ENCODE measurements at regions of chr17 and their contacts with region 1.

Region 1: GRCh38 chr17:31094600-31095238 is at the start of gene NF1:
- DNase-seq: peak; percentile 92
- H3K4me3 Mint-ChIP-seq: peak within 1 kb of the TSS; percentile 94
- H3K27ac Mint-ChIP-seq: peak within 1 kb of the TSS; percentile 72
- H3K4me1 Mint-ChIP-seq: peaks cover 11% of the 10 kb centered on the region
- H3K27me3 Mint-ChIP-seq: no peaks in the 10 kb centered on the region
- total RNA-seq, gene NF1: 19.5 to 22.8 TPM

Region 2: GRCh38 chr17:30970831-30971567 is 123.7 kb before region 1 on chr17 and contains the start of gene RNF135:
- CTCF ChIA-PET with region 1: no interaction called
- intact Hi-C with region 1: no loop called
- DNase-seq: peak; percentile 60
- H3K4me3 Mint-ChIP-seq: peak within 1 kb of the TSS; percentile 88
- H3K27ac Mint-ChIP-seq: peak within 1 kb of the TSS; percentile 79
- H3K4me1 Mint-ChIP-seq: peaks cover 31% of the 10 kb centered on the region
- H3K27me3 Mint-ChIP-seq: peaks cover 9% of the 10 kb centered on the region
- total RNA-seq, gene RNF135: 5.0 to 5.4 TPM

Region 3: GRCh38 chr17:31052187-31052889 is 42.4 kb before region 1 on chr17:
- CTCF ChIA-PET with region 1: no interaction called
- intact Hi-C with region 1: no loop called
- DNase-seq: no peak
- H3K4me3 Mint-ChIP-seq: no peak overlapping the region
- H3K27ac Mint-ChIP-seq: no peak overlapping the region
- H3K4me1 Mint-ChIP-seq: peaks cover 6% of the 10 kb centered on the region
- H3K27me3 Mint-ChIP-seq: no peaks in the 10 kb centered on the region

Region 4: DNA sequence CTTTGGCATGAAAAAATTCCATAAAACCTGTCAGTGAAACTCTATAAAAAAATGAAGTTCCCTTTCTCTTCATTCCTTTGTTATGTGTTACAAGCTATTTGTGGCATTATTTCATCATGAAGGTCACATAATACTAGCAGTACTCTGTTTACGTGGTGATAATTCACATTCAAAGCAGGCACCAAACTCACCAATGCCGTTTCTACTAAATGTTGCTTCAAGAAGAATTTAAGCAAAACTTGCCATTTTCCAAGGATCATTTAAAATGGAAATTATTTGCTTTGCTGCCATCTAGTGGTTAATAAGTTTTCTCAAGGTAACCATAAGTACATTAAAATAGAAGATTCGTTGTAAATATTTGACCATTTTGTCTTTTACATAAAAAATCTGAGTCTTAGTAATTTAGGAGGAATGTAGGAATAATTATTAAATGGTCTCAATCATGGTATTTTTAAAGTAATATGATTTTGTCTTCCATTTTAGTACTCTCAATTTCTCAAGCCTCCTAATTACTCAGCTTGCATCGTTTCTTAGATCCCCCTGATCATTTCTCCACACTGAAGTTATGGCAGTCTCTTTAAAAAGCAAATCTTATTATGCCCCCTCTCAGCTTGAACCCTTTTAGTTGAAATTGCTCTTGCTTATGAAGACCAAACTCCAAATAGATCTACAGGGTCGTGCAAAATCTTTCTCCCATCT is 121.5 kb after region 1 on chr17:
- CTCF ChIA-PET with region 1: interaction called, 6 read pairs
- intact Hi-C with region 1: loop called (anchors 5 kb)
- DNase-seq: no peak
- H3K4me3 Mint-ChIP-seq: no peak overlapping the region
- H3K27ac Mint-ChIP-seq: no peak overlapping the region
- H3K4me1 Mint-ChIP-seq: no peaks in the 10 kb centered on the region
- H3K27me3 Mint-ChIP-seq: no peaks in the 10 kb centered on the region

Region 5: GRCh38 chr17:31294820-31295488 is 200.2 kb after region 1 on chr17:
- CTCF ChIA-PET with region 1: no interaction called
- intact Hi-C with region 1: no loop called
- DNase-seq: no peak
- H3K4me3 Mint-ChIP-seq: no peak overlapping the region
- H3K27ac Mint-ChIP-seq: no peak overlapping the region
- H3K4me1 Mint-ChIP-seq: peaks cover 22% of the 10 kb centered on the region
- H3K27me3 Mint-ChIP-seq: no peaks in the 10 kb centered on the region

Region 6: DNA sequence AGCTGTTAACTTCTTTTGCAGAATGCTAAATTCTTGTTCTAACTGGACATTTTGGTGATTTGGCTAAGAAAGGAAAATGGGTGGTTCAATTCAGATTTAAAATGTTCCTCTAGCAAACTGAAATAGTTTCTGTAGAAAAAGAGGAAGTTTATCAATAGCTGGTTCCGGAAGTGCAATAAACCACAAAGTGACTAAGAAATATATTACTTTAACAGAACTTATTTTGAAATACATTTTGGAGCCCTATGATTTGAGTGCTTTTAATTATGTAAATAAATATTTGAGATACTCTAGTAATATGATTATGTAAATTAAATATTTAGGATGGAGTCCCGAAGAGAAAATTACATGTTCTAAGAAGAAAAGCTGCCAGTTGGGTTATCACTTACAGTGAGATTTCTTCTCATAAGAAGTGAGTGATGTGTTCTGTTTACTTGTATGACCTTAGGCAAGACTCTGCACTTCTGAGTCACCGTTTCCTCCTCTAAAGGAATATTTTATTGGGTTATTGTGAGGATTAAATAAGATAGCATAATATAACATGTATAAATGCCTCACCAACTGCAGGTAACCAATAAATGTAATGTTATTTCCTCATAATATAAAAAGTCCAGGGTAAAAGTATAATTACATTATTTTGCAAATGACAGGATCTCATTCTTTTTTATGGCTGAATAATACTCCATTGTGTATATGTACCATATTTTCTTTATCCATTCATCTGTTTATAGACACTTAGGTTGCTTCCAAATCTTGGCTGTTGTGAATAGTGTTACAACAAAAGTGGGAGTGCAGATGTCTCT is 219.5 kb after region 1 on chr17 and contains the start of gene EVI2B:
- CTCF ChIA-PET with region 1: no interaction called
- intact Hi-C with region 1: loop called (anchors 5 kb)
- DNase-seq: peak; percentile 18
- H3K4me3 Mint-ChIP-seq: peak within 1 kb of the TSS; percentile 82
- H3K27ac Mint-ChIP-seq: peak within 1 kb of the TSS; percentile 96
- H3K4me1 Mint-ChIP-seq: peaks cover 46% of the 10 kb centered on the region
- H3K27me3 Mint-ChIP-seq: no peaks in the 10 kb centered on the region
- total RNA-seq, gene EVI2B: 9.9 to 11.4 TPM

Region 7: GRCh38 chr17:31487648-31488263 is 393.0 kb after region 1 on chr17:
- CTCF ChIA-PET with region 1: no interaction called
- intact Hi-C with region 1: loop called (anchors 10 kb)
- DNase-seq: peak; percentile 91
- H3K4me3 Mint-ChIP-seq: peak overlapping the region; percentile 81
- H3K27ac Mint-ChIP-seq: peak overlapping the region; percentile 34
- H3K4me1 Mint-ChIP-seq: peaks cover 45% of the 10 kb centered on the region
- H3K27me3 Mint-ChIP-seq: no peaks in the 10 kb centered on the region

Measured in activated naive CD4-positive, alpha-beta T cell treated with anti-CD3 and anti-CD28 coated beads for 36 hours (primary cell).